ENCODE measurements at regions of chr17 and their contacts with region 1.

Region 1: DNA sequence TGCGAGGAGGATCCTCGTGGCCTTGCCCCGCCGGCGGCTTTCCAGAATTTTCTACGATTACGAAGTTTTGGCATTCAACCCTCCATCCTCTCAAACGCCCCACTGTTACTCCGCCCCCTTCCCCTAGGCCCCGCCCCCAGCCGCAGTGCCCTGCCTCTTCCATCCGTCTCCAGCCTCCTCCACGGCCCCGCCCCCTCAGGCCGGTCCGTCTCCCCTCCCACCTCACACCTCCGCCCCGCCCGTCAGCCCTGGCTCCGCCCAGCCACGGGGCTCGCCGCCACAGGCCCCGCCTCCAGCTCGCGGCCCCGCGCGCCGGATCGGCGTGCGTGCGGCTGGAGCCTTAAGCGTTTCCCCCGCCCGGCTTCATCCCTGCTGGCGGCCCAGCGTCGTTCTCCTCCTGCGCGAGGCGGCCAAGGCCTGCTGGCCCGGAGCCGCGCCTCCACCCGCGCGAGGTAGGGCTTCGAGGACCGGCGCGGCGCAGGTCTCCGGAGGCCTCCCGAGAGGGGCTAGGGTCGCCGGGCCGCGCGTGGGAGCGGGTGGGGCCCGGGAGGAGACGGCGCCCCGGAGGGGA is at the starts of genes C17orf67 and DGKE:
- DNase-seq: peak; percentile 99
- ATAC-seq: peak; percentile 92
- H3K4me3 Mint-ChIP-seq: peak within 1 kb of the TSS; percentile 93
- H3K27ac Mint-ChIP-seq: peak within 1 kb of the TSS; percentile 88
- H3K4me1 Mint-ChIP-seq: peaks cover 42% of the 10 kb centered on the region
- H3K27me3 Mint-ChIP-seq: no peaks in the 10 kb centered on the region
- CTCF ChIP-seq: no peak
- total RNA-seq, gene C17orf67: 3.3 and 4.0 TPM in 2 replicates
- total RNA-seq, gene DGKE: 15.4 and 20.3 TPM in 2 replicates

Region 2: GRCh38 chr17:56751145-56751738 is 82.7 kb before region 1 on chr17:
- CTCF ChIA-PET with region 1: no interaction called
- POLR2A ChIA-PET with region 1: no interaction called
- intact Hi-C with region 1: no loop called
- DNase-seq: no peak
- ATAC-seq: no peak
- H3K4me3 Mint-ChIP-seq: no peak overlapping the region
- H3K27ac Mint-ChIP-seq: no peak overlapping the region
- H3K4me1 Mint-ChIP-seq: no peaks in the 10 kb centered on the region
- H3K27me3 Mint-ChIP-seq: peaks cover 5% of the 10 kb centered on the region
- CTCF ChIP-seq: no peak

Region 3: GRCh38 chr17:56779898-56780733 is 53.8 kb before region 1 on chr17:
- CTCF ChIA-PET with region 1: no interaction called
- POLR2A ChIA-PET with region 1: no interaction called
- intact Hi-C with region 1: loop called (anchors 2 kb)
- DNase-seq: peak; percentile 80
- ATAC-seq: peak; percentile 99
- H3K4me3 Mint-ChIP-seq: peak overlapping the region; percentile 85
- H3K27ac Mint-ChIP-seq: peak overlapping the region; percentile 3
- H3K4me1 Mint-ChIP-seq: peaks cover 10% of the 10 kb centered on the region
- H3K27me3 Mint-ChIP-seq: peaks cover 34% of the 10 kb centered on the region
- CTCF ChIP-seq: peak; percentile 99

Region 4: DNA sequence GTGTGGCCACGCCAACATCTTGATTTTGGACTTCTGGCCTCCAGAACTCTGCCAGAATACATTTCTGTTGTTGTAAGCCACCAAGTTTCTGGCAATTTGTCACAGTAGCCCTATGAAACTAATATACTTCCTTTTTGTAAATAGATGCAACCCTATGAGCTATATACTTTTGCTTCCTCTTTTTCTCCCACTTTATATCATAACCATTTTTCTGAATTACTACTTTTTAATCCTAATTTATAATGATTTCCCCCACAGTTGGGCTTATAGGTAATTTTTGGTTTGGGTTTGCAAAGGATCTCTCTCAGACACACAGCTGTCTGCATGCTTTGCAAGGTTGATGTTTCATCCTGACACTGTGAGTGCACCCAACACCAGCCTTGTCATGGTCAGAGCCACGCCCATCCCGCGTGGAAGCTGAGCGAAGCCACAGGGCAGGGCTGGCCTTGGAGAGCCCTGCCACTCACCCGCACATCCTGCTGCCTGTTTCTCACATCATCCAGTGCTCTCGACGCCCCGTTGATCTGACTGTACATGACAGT is 74.2 kb after region 1 on chr17:
- CTCF ChIA-PET with region 1: no interaction called
- POLR2A ChIA-PET with region 1: interaction called, 12 read pairs
- intact Hi-C with region 1: no loop called
- DNase-seq: peak; percentile 57
- ATAC-seq: peak; percentile 95
- H3K4me3 Mint-ChIP-seq: peak overlapping the region; percentile 75
- H3K27ac Mint-ChIP-seq: peak overlapping the region; percentile 96
- H3K4me1 Mint-ChIP-seq: peaks cover 62% of the 10 kb centered on the region
- H3K27me3 Mint-ChIP-seq: no peaks in the 10 kb centered on the region
- CTCF ChIP-seq: no peak

Region 5: DNA sequence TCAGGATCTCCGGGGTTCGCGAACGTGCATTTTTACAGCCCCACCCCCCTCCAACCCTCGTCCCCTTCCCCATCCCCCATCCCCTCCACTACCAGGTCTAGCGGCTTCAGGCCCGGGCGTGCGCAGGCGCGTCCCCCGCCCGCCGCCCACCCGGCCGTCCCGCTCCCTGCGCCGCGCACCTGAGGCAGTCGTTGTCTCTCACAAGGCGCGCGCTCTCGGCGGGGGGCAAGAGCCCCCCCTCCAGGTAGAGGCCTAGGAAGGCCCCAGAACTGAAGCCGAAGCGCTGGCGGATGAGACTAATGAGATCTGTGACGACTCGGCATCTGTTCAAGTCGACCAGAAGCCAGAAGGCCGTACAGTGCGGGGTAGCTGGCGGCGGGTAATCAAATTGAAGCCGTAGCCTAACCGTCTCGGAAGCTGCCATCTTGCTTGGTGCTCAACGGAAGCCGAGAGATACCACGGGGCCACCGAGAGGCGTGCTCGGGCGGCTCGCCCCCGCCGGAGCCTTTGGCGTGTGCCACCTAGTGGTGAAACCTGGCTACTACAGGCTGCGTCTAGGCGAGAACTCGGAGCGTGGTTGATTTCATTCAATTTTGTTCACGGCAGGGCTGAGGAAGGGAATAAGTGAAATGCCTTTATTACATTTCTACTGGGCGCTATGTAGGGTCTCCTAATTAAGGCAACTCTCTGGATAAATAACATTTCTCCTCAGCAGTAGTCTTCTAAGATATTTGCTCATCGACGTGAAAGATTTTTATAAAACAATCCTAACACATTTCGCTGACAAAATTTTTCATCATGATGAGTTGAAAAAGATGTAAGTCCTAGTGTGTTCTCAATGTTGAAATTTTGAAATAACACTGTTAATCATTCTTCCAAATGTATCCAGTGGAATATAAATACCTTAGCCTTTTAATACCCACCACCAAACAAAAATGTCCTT is 127.0 kb after region 1 on chr17 and contains the start of gene COIL:
- CTCF ChIA-PET with region 1: no interaction called
- POLR2A ChIA-PET with region 1: no interaction called
- intact Hi-C with region 1: loop called (anchors 1 kb)
- DNase-seq: peak; percentile 90
- ATAC-seq: peak; percentile 98
- H3K4me3 Mint-ChIP-seq: peak within 1 kb of the TSS; percentile 86
- H3K27ac Mint-ChIP-seq: peak within 1 kb of the TSS; percentile 84
- H3K4me1 Mint-ChIP-seq: peaks cover 23% of the 10 kb centered on the region
- H3K27me3 Mint-ChIP-seq: no peaks in the 10 kb centered on the region
- CTCF ChIP-seq: peak; percentile 95
- total RNA-seq, gene COIL: 21.6 and 21.9 TPM in 2 replicates

Region 6: DNA sequence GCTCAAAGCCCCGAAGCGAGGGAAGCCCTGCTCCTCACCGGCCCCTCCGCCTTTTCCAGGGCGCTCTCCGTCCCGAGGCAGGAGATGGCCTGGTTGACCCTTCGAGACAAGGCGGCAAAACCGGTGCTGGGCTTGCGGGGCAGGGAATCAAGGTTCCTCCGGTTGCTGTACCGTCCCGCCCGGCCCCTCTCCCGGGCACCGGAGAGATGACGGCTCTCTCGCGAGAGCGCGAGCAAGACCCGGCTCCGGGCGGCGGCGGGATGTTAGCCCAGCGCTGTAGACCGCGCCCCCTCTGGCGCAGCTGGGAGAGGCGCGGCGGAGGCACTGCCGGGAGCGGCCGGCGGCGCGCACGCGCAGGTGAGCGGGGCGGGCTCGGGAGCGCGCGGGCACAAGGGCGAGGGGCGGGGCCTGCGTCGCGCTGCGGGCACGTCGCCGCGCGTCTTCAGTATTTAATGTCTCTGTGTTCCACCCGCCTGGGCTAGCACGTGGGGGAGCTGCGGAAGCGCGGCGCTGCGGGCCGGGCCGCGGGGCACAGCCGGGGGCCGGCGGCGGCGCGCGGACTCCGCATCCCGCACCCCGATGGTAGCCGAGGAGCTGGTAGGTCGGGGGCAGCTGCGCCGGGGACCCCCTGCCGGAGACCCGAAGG is 251.0 kb after region 1 on chr17 and contains the start of gene AKAP1:
- CTCF ChIA-PET with region 1: no interaction called
- POLR2A ChIA-PET with region 1: interaction called, 3 read pairs
- intact Hi-C with region 1: loop called (anchors 1 kb)
- DNase-seq: peak; percentile 94
- ATAC-seq: peak; percentile 89
- H3K4me3 Mint-ChIP-seq: peak within 1 kb of the TSS; percentile 90
- H3K27ac Mint-ChIP-seq: peak within 1 kb of the TSS; percentile 91
- H3K4me1 Mint-ChIP-seq: peaks cover 25% of the 10 kb centered on the region
- H3K27me3 Mint-ChIP-seq: no peaks in the 10 kb centered on the region
- CTCF ChIP-seq: no peak
- total RNA-seq, gene AKAP1: 22.5 and 26.2 TPM in 2 replicates